Esophagus muscularis mucosa (tissue), 4 donors: ENCODE measurements at regions of chr19 and their contacts with region 1.

Region 1: DNA sequence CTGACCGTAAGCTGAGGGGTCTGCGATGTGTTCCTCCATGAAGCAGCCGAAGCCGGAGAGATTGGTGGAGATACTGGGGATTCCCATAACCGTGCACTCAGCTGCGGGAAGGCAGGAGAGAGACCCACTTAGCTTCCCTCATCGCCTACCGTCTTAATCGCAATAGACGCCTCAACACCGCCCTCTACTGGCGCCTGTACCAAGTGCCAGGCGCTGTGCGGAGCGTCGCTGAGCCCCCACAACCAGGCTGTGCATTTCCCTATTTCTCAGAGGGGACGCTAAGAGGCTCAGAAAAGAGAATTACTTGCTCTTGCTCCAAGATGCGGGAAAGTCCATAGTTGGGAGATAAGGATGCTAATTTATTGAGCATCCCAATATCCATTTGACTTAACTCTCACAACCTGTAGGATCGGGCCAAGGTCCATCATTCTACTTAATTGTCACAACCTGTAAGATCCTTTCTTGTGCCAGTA is 5.8 kb downstream of the FTL start:
- DNase-seq: no peak
- H3K4me3 ChIP-seq: no peak overlapping the region
- H3K27ac ChIP-seq: peak overlapping the region in 3 of 4 donors; percentile 32 to 61 (median 51)
- H3K4me1 ChIP-seq: peaks cover 32 to 41% (median 37%) of the 10 kb centered on the region in 4 donors
- H3K27me3 ChIP-seq: no peaks in the 10 kb centered on the region
- CTCF ChIP-seq: peak; percentile 85 to 99 (median 95)
- EP300 ChIP-seq: no peak
- POLR2A ChIP-seq: no peak

Region 2: GRCh38 chr19:48734625-48735555 is 236.1 kb before region 1 on chr19:
- intact Hi-C with region 1: no loop called
- DNase-seq: no peak
- H3K4me3 ChIP-seq: no peak overlapping the region
- H3K27ac ChIP-seq: no peak overlapping the region
- H3K4me1 ChIP-seq: peaks cover 6 to 24% (median 19%) of the 10 kb centered on the region in 4 donors
- H3K27me3 ChIP-seq: peaks cover 0 to 22% (median 2%) of the 10 kb centered on the region in 4 donors
- CTCF ChIP-seq: no peak
- EP300 ChIP-seq: no peak
- POLR2A ChIP-seq: no peak

Region 3: DNA sequence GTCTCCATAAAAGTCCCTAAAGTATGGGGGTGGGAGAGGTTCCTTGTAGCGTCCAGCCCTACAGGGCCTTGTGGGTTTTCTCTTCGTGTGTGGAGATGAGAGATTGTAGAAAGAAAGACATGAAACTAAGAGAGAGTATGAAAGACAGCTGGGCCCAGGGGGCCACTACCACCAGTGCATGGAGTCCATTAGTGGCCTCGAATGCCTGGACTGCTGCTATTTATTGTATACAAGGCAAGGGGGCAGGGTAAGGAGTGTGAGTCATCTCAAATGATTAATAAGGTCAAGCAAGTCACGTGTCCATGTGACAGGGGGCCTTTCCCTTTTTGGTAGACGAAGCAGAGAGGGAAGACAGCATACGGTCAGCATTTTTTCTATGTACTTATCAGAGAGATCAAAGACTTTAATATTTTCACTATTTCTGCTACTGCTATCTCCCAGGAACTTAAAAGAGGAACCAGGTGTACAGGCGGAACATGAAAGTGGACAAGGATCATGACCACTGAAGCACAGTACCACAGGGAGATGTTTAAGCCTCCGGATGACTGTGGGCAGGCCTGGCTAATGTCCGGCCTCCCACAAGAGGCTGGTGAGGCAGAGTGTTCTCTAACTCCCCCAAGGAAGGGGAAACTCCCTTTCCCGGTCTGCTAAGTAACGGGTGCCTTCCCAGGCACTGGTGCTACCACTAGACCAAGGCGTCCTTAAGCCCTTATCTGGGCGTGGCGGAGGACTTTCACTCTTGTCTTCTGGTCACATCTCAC is 190.1 kb before region 1 on chr19:
- intact Hi-C with region 1: loop called (anchors 5 kb)
- DNase-seq: no peak
- H3K4me3 ChIP-seq: no peak overlapping the region
- H3K27ac ChIP-seq: peak overlapping the region in 3 of 4 donors; percentile 46 to 58 (median 48)
- H3K4me1 ChIP-seq: peaks cover 8 to 21% (median 20%) of the 10 kb centered on the region in 4 donors
- H3K27me3 ChIP-seq: no peaks in the 10 kb centered on the region
- CTCF ChIP-seq: no peak
- EP300 ChIP-seq: no peak
- POLR2A ChIP-seq: no peak

Region 4: DNA sequence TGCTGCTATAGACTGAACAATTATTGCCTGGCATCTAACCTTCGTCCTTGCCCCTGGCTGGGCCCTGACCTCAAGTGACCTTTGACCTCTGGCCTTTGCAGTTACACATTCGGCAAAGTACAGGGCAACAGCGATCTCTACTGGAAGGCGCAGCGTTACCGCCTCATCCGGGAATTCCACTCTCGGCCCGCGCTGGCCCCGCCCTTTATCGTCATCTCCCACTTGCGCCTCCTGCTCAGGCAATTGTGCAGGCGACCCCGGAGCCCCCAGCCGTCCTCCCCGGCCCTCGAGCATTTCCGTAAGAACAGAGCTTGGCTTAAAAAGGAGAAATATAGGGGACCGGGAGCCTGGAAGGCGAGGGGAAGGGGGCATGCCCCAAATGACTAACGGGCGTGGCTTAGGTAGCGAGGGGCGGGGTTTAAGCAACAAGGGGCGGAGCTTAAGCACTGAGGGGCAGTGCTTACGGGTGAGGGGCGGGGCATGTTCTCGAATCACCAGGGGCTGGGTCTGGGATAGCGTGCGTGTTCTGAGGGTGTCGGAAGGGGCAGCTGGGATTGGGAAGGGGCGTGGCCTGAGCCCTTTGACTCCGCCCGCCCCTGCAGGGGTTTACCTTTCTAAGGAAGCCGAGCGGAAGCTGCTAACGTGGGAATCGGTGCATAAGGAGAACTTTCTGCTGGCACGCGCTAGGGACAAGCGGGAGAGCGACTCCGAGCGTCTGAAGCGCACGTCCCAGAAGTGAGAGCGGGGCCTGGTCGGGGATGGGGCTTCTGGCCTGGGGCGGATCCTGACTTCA is 239.3 kb after region 1 on chr19:
- intact Hi-C with region 1: no loop called
- DNase-seq: no peak
- H3K4me3 ChIP-seq: peak overlapping the region; percentile 9 to 41 (median 26)
- H3K27ac ChIP-seq: peak overlapping the region in 3 of 4 donors; percentile 34 to 60 (median 48)
- H3K4me1 ChIP-seq: peaks cover 0 to 24% (median 21%) of the 10 kb centered on the region in 4 donors
- H3K27me3 ChIP-seq: no peaks in the 10 kb centered on the region
- CTCF ChIP-seq: no peak
- EP300 ChIP-seq: no peak
- POLR2A ChIP-seq: no peak